BJ (cell line): ENCODE measurements at regions of chr11 and their contacts with region 1.

Region 1: DNA sequence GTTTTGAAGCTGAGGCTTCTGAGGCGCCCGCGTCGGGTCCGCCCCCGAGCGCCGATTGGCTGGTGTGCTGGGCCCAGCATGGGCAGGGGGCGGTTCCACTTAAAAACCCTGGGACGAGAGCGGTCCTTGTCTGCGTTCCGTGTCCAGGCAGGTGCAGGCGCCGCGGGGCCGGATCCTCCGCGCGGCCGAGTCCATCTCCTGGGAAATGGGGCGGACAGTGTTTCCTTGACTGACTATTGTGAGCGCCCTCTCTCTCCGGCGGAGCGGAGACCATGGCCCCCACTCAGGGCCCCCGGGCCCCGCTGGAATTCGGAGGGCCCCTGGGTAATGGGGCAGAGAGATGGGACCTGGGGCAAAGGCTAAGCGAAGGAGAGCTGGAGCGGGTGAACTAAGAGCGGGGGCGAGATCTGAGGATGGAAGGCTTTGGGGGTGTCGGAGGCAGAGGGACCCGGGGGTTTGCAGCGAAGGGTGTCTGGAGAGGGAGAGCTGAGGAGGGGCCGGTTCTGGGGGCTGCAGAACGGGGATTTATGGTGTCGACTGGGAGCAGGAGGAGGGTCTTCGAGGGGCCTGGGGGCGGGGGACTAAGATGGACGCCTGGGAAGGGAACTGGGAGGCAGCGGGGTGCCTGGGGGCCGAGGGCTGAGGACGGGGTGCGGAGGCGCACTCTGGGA is at the start of gene TM7SF2:
- DNase-seq: peak; percentile 49
- H3K4me3 ChIP-seq: peak within 1 kb of the TSS; percentile 44
- H3K27me3 ChIP-seq: no peaks in the 10 kb centered on the region
- CTCF ChIP-seq: no peak
- polyA plus RNA-seq, gene TM7SF2: 5.0 and 8.2 TPM in 2 replicates

Region 2: DNA sequence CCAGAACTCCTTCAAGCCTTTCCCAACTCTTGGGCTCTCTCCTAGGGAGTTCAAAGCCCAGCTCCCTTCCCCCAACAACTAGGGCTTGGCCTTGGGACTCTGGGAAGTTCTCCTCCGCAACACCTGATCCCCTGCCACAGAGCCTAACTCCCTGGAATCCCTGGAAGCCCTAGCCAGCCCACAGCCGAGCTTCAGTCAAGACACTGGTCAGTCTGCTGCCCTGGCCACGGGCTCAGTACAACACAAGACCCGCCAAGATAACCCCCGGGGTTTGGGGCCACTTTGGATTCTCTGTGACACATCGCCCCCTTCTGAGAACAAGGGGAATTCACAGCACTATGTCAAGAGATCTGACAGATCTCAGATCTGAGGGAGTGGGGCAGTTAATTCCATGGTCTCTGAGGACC is 462.6 kb before region 1 on chr11:
- CTCF ChIA-PET with region 1: no interaction called
- POLR2A ChIA-PET with region 1: no interaction called
- DNase-seq: no peak
- H3K4me3 ChIP-seq: no peak overlapping the region
- H3K27me3 ChIP-seq: peaks cover 24% of the 10 kb centered on the region
- CTCF ChIP-seq: 0 out of 2 replicates have a peak, but pooled peaks have one; percentile 22

Region 3: DNA sequence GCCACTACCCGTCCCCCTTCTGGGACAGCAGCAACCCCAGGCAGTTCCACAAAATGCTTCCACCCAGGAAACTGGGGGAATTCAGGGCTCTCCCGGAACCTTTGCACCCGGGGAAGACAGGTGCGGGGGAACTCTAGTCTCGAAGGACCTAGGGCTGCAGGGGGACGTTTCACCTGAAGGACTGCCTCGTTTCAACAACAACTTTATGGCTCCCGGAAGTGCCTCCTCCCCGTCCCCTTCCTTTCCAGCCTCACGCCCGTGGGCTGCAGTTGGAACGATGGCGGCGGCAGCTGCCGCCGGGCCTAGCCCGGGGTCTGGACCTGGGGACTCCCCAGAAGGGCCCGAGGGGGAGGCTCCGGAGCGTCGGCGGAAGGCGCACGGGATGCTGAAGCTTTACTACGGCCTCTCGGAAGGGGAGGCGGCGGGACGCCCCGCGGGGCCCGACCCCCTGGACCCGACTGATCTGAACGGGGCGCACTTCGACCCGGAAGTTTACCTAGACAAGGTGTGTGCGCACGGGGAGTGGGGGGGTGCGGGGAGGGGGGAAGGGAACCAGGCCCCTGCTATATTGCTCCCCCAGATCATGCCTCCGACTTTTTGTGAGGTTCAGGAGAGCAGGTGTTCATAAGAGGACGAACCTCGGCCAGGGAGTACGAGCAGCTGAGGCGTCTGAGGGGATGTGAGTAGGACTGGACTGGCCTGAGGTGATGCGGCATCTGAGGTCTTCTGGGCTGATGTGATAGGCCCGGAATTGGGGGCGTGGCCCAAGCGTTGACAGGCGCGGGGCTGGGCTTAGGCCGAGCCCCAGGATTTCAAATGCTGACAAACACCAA is 15.7 kb before region 1 on chr11 and contains the start of gene VPS51:
- CTCF ChIA-PET with region 1: interaction called, 152 read pairs
- POLR2A ChIA-PET with region 1: interaction called, 5 read pairs
- DNase-seq: no peak
- H3K4me3 ChIP-seq: peak within 1 kb of the TSS; percentile 63
- H3K27me3 ChIP-seq: no peaks in the 10 kb centered on the region
- CTCF ChIP-seq: no peak
- polyA plus RNA-seq, gene VPS51: 61.8 and 86.2 TPM in 2 replicates

Region 4: DNA sequence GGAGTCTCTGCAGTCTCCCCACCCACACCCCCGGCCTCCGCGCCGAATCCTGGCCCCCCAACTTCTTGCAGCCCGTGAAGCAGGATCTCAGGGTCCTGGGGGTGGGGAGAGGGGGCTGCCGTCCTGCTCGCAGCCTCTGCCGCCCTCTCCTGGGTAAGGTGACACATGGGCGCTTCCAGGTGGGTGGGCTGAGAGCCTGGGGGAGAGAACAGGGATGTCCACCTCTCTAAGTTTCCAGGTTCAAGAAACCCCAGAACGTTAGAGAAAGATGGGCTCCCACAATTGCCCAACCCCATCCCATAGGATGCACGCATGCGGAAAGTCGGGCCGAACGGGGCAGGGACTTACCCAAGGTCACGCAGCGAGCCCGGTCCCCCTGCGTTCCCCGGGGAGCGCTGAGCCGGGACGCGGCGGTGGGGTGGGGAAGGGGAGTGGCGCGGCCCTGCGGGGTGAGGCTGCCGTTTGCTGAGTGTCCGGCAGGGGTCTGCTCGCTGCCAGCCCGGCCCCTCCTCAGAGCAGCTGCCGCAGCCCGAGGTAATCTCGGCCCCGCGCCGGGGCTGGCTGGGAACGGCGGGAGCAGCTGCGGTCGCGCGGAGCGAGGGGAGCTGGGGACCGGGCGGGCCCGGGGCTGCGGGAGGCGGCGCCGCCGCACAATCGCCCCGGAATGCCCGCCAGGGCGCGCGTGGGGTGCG is 69.1 kb after region 1 on chr11:
- CTCF ChIA-PET with region 1: interaction called, 14 read pairs
- POLR2A ChIA-PET with region 1: no interaction called
- DNase-seq: no peak
- H3K4me3 ChIP-seq: peak overlapping the region; percentile 81
- H3K27me3 ChIP-seq: no peaks in the 10 kb centered on the region
- CTCF ChIP-seq: peak; percentile 49; the same call in 1 of the 2 replicates